ENCODE measurements at regions of chr11 and their contacts with region 1.

Region 1: GRCh38 chr11:115924744-115925567 is 420.7 kb upstream of the CADM1 start:
- DNase-seq: peak; percentile 99
- ATAC-seq: peak; percentile 62
- H3K4me3 ChIP-seq: no peak overlapping the region
- H3K27ac ChIP-seq: peak overlapping the region; percentile 95
- H3K4me1 ChIP-seq: peaks cover 97% of the 10 kb centered on the region
- H3K27me3 ChIP-seq: no peaks in the 10 kb centered on the region
- CTCF ChIP-seq: 0 out of 6 replicates have a peak, but pooled peaks of 1 of the 3 experiments have one; percentile 0
- EP300 ChIP-seq: peak; percentile 94 to 95
- POLR2A ChIP-seq: peak; percentile 57; the same call in 1 of the 2 replicates
- RAD21 ChIP-seq: peak; percentile 32

Region 2: DNA sequence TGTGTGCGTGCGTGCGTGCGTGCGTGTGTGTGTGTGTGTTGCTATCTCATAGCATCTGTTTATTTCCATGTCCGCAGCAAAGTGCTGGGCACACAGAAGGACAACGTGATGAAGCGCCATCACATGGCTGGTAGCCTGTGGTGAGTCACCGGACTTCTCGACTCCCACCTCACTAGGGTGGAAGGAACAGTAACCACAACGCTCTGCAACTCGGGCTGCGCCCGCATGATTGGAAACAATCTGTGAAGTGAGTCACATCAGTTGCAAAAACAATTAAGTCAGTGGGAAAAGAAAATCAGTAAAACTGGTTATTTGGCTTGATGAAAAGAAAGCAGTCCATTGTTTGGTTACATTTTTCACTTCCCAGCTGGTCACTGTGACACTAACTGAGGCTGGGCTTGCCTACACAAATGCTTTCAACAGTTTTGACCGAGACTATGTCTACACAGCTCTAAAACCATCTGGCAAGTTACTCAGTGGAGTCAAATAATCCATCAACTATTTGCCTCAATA is 16.6 kb after region 1 on chr11:
- CTCF ChIA-PET with region 1: interaction called, 22 read pairs
- POLR2A ChIA-PET with region 1: interaction called, 28 read pairs
- RAD21 ChIA-PET with region 1: interaction called, 94 read pairs
- SMC1A ChIA-PET with region 1: interaction called, 94 read pairs
- in situ Hi-C with region 1: no loop called
- intact Hi-C with region 1: no loop called
- DNase-seq: no peak
- ATAC-seq: no peak
- H3K4me3 ChIP-seq: no peak overlapping the region
- H3K27ac ChIP-seq: no peak overlapping the region
- H3K4me1 ChIP-seq: peaks cover 7% of the 10 kb centered on the region
- H3K27me3 ChIP-seq: no peaks in the 10 kb centered on the region
- CTCF ChIP-seq: no peak
- EP300 ChIP-seq: no peak
- POLR2A ChIP-seq: no peak
- RAD21 ChIP-seq: no peak

Region 3: GRCh38 chr11:115990004-115990447 is 65.1 kb after region 1 on chr11:
- CTCF ChIA-PET with region 1: interaction called, 39 read pairs
- POLR2A ChIA-PET with region 1: interaction called, 3 read pairs
- RAD21 ChIA-PET with region 1: interaction called, 11 read pairs
- SMC1A ChIA-PET with region 1: interaction called, 21 read pairs
- in situ Hi-C with region 1: loop called (anchors 5 kb)
- intact Hi-C with region 1: no loop called
- DNase-seq: no peak
- ATAC-seq: peak; percentile 91
- H3K4me3 ChIP-seq: no peak overlapping the region
- H3K27ac ChIP-seq: no peak overlapping the region
- H3K4me1 ChIP-seq: no peaks in the 10 kb centered on the region
- H3K27me3 ChIP-seq: no peaks in the 10 kb centered on the region
- CTCF ChIP-seq: peak; percentile 60 to 81 (median 62); a peak in 5 of 6 replicates
- EP300 ChIP-seq: no peak
- POLR2A ChIP-seq: no peak
- RAD21 ChIP-seq: peak; percentile 56

Region 4: DNA sequence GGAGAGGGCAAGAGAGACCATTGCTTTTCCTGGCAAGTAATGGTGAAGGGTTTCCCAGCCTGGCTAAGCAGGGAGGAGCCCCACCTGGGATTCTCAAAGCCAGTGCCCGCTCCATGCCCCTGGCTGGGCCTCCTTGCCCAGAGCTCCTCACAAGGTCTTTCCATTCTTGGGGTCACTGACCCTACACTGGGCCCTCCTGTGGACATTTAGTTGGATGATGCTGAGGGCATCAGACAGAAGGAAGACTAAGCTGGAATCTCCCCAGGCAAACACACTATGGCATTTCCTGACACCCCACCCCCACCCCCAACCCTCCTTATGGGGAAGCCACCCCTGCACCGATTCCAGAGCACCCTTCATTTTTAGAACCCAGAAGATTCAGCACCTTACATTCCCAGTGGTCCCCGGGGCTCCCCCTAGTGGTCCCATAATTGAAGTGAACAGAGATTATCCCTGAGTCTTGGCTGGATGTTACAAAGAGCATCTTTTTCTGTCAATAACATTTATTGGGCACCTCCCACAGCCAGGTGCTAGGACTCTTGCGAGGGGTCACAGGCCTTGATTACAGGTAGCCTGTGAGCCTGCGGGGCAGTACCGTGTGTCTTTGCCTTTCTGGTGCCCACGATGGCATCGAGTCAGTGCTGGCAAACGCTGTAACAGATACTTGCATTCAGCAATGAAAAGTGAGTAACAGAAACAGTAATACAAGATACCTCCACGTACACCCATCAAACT is 299.4 kb after region 1 on chr11:
- CTCF ChIA-PET with region 1: interaction called, 4 read pairs
- POLR2A ChIA-PET with region 1: no interaction called
- RAD21 ChIA-PET with region 1: no interaction called
- SMC1A ChIA-PET with region 1: no interaction called
- in situ Hi-C with region 1: no loop called
- intact Hi-C with region 1: loop called (anchors 2 kb)
- DNase-seq: no peak
- ATAC-seq: peak; percentile 92
- H3K4me3 ChIP-seq: no peak overlapping the region
- H3K27ac ChIP-seq: no peak overlapping the region
- H3K4me1 ChIP-seq: no peaks in the 10 kb centered on the region
- H3K27me3 ChIP-seq: no peaks in the 10 kb centered on the region
- CTCF ChIP-seq: peak; percentile 70 to 78 (median 76)
- EP300 ChIP-seq: no peak
- POLR2A ChIP-seq: no peak
- RAD21 ChIP-seq: peak; percentile 81